ENCODE measurements at regions of chr7 and their contacts with region 1.

Region 1: GRCh38 chr7:111933609-111934008 is 272.6 kb downstream of the DOCK4 start:
- DNase-seq: no peak
- ATAC-seq: no peak
- H3K4me3 Mint-ChIP-seq: no peak overlapping the region
- H3K27ac Mint-ChIP-seq: no peak overlapping the region
- H3K4me1 Mint-ChIP-seq: peaks cover 9% of the 10 kb centered on the region
- H3K27me3 Mint-ChIP-seq: no peaks in the 10 kb centered on the region

Region 2: DNA sequence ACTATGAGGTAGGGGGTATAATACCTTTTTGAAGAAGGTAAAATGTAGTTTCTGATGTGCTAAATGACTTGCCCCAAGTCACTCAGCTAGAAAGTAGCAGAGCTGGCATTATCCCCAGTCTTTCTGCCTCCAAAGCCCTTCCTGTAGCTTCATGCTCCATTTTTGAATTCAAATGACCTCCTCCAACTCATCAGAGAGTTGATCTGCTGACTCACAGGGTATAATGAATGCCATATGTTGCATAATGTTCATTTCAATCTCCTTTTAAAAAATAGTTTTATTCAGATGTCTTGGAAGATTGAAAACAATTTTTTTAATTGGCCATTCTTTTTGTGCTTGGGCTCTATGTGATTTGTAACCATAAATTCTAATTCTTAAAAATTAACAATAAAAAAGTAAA is 98.5 kb before region 1 on chr7:
- CTCF ChIA-PET with region 1: no interaction called
- POLR2A ChIA-PET with region 1: interaction called, 11 read pairs
- intact Hi-C with region 1: no loop called
- DNase-seq: no peak
- ATAC-seq: no peak
- H3K4me3 Mint-ChIP-seq: no peak overlapping the region
- H3K27ac Mint-ChIP-seq: no peak overlapping the region
- H3K4me1 Mint-ChIP-seq: no peaks in the 10 kb centered on the region
- H3K27me3 Mint-ChIP-seq: peaks cover 5% of the 10 kb centered on the region

Region 3: GRCh38 chr7:111960984-111961383 is 27.4 kb after region 1 on chr7:
- CTCF ChIA-PET with region 1: no interaction called
- POLR2A ChIA-PET with region 1: no interaction called
- intact Hi-C with region 1: no loop called
- DNase-seq: no peak
- ATAC-seq: no peak
- H3K4me3 Mint-ChIP-seq: no peak overlapping the region
- H3K27ac Mint-ChIP-seq: no peak overlapping the region
- H3K4me1 Mint-ChIP-seq: no peaks in the 10 kb centered on the region
- H3K27me3 Mint-ChIP-seq: no peaks in the 10 kb centered on the region

Region 4: DNA sequence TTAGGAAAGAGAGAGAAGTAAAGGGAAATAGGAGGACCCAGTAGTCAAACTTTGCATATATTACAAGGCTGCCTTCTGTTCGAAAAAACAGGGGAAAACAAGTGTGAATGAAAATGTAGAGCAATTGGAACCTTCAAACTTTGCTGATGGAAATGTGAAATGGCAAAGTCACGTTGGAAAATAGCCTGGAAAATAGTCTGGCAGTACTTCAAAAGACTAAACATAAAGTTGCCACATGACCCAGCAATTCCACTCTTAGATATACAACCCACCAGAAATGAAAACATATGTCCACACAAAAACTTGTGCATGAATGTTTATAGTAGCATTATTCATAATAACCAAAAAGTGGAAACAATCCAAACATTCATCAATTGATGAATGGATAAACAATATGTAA is 438.1 kb after region 1 on chr7:
- CTCF ChIA-PET with region 1: no interaction called
- POLR2A ChIA-PET with region 1: no interaction called
- intact Hi-C with region 1: no loop called
- DNase-seq: no peak
- ATAC-seq: no peak
- H3K4me3 Mint-ChIP-seq: no peak overlapping the region
- H3K27ac Mint-ChIP-seq: no peak overlapping the region
- H3K4me1 Mint-ChIP-seq: no peaks in the 10 kb centered on the region
- H3K27me3 Mint-ChIP-seq: no peaks in the 10 kb centered on the region